ENCODE measurements at regions of chr14 and their contacts with region 1.

Region 1: GRCh38 chr14:67695394-67695949 is at the start of gene RDH11:
- DNase-seq: peak; percentile 87
- ATAC-seq: peak; percentile 98
- H3K4me3 ChIP-seq: peak within 1 kb of the TSS; percentile 77 to 97 (median 94)
- H3K4me3 Mint-ChIP-seq: peak within 1 kb of the TSS; percentile 96
- H3K27ac ChIP-seq: peak within 1 kb of the TSS; percentile 62 to 88
- H3K27ac Mint-ChIP-seq: peak within 1 kb of the TSS; percentile 89
- H3K4me1 ChIP-seq: peaks cover 6 to 13% of the 10 kb centered on the region in 2 donors
- H3K4me1 Mint-ChIP-seq: peaks cover 14% of the 10 kb centered on the region
- H3K27me3 ChIP-seq: no peaks in the 10 kb centered on the region
- H3K27me3 Mint-ChIP-seq: no peaks in the 10 kb centered on the region
- CTCF ChIP-seq: no peak
- total RNA-seq, gene RDH11: 32.8 and 35.4 TPM in 2 replicates

Region 2: DNA sequence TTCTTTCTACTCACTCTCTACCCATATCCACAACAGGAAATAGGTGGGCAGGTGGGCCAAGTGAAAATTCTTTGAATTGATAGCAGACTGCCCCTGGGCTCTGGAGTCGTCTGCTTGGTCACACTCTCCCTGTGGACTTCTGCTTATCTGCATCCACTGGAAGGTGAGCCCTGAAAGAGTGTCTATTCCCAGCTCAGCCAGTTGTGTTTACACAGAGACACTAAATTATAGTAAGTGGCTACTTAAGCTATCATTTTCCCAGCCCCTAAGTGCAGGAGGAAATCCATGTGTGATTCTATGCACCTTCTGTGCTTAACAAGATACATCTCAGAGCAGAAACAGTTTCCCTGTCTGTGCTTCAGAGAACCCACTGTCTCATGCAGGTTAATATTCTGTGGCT is 1944.6 kb before region 1 on chr14:
- CTCF ChIA-PET with region 1: no interaction called
- POLR2A ChIA-PET with region 1: no interaction called
- intact Hi-C with region 1: no loop called
- DNase-seq: no peak
- ATAC-seq: no peak
- H3K4me3 ChIP-seq: no peak overlapping the region
- H3K4me3 Mint-ChIP-seq: no peak overlapping the region
- H3K27ac ChIP-seq: no peak overlapping the region
- H3K27ac Mint-ChIP-seq: no peak overlapping the region
- H3K4me1 ChIP-seq: no peaks in the 10 kb centered on the region
- H3K4me1 Mint-ChIP-seq: no peaks in the 10 kb centered on the region
- H3K27me3 ChIP-seq: no peaks in the 10 kb centered on the region
- H3K27me3 Mint-ChIP-seq: no peaks in the 10 kb centered on the region
- CTCF ChIP-seq: no peak

Region 3: GRCh38 chr14:67359775-67360648 is 335.5 kb before region 1 on chr14 and contains the starts of genes ATP6V1D and EIF2S1:
- CTCF ChIA-PET with region 1: no interaction called
- POLR2A ChIA-PET with region 1: no interaction called
- intact Hi-C with region 1: loop called (anchors 1 kb)
- DNase-seq: peak; percentile 100
- ATAC-seq: peak; percentile 90
- H3K4me3 ChIP-seq: peak within 1 kb of the TSS; percentile 79 to 97 (median 93)
- H3K4me3 Mint-ChIP-seq: peak within 1 kb of the TSS; percentile 100
- H3K27ac ChIP-seq: peak within 1 kb of the TSS; percentile 92 to 95
- H3K27ac Mint-ChIP-seq: peak within 1 kb of the TSS; percentile 100
- H3K4me1 ChIP-seq: peaks cover 26% of the 10 kb centered on the region in 2 donors
- H3K4me1 Mint-ChIP-seq: peaks cover 50% of the 10 kb centered on the region
- H3K27me3 ChIP-seq: no peaks in the 10 kb centered on the region
- H3K27me3 Mint-ChIP-seq: no peaks in the 10 kb centered on the region
- CTCF ChIP-seq: peak; percentile 100
- total RNA-seq, gene ATP6V1D: 35.3 and 35.6 TPM in 2 replicates
- total RNA-seq, gene EIF2S1: 39.3 and 39.9 TPM in 2 replicates

Region 4: GRCh38 chr14:67583711-67584644 is 111.5 kb before region 1 on chr14:
- CTCF ChIA-PET with region 1: interaction called, 392 read pairs
- POLR2A ChIA-PET with region 1: no interaction called
- intact Hi-C with region 1: no loop called
- DNase-seq: peak; percentile 76
- ATAC-seq: peak; percentile 80
- H3K4me3 ChIP-seq: no peak overlapping the region
- H3K4me3 Mint-ChIP-seq: no peak overlapping the region
- H3K27ac ChIP-seq: no peak overlapping the region
- H3K27ac Mint-ChIP-seq: no peak overlapping the region
- H3K4me1 ChIP-seq: no peaks in the 10 kb centered on the region
- H3K4me1 Mint-ChIP-seq: peaks cover 6% of the 10 kb centered on the region
- H3K27me3 ChIP-seq: no peaks in the 10 kb centered on the region
- H3K27me3 Mint-ChIP-seq: no peaks in the 10 kb centered on the region
- CTCF ChIP-seq: peak; percentile 85

Region 5: DNA sequence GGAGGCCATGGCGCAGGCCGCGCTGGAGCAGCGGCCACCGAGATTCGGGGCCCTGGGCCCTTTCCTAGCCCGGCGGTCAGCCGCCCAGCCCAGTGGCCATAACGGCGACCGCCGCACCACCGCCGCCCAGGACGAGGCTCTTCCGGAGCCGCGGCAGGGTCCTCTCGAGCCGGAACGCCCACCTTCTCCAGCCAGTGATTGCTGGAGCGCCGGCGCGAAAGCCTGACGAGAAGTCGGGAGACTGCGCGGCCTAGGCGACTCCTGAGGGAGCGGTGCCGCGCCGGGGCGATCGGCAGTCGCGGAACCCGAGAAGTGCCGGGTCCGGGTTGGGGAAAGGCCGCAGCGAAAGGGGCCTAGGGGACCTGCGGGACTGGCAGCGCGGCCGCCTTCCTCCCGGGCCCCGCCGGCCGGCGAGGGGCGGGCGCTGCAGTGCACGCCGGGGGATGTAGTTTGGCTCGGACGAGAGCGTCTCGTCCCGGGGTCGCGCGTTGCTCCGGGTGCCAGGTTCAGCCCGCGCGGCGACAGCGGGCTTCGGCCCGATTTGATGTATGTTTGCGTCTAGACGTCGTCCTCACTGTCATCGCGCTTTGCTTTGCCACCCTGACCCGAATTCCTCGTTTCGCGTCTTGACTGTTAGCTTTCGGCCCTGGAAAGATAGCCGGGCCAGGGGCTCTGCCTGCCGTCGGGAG is 20.8 kb before region 1 on chr14 and contains the start of gene VTI1B:
- CTCF ChIA-PET with region 1: interaction called, 6 read pairs
- POLR2A ChIA-PET with region 1: no interaction called
- intact Hi-C with region 1: loop called (anchors 1 kb)
- DNase-seq: peak; percentile 94
- ATAC-seq: peak; percentile 92
- H3K4me3 ChIP-seq: peak within 1 kb of the TSS; percentile 71 to 97 (median 87)
- H3K4me3 Mint-ChIP-seq: peak within 1 kb of the TSS; percentile 86
- H3K27ac ChIP-seq: peak within 1 kb of the TSS; percentile 96 to 99
- H3K27ac Mint-ChIP-seq: peak within 1 kb of the TSS; percentile 95
- H3K4me1 ChIP-seq: peaks cover 19 to 22% of the 10 kb centered on the region in 2 donors
- H3K4me1 Mint-ChIP-seq: peaks cover 30% of the 10 kb centered on the region
- H3K27me3 ChIP-seq: no peaks in the 10 kb centered on the region
- H3K27me3 Mint-ChIP-seq: no peaks in the 10 kb centered on the region
- CTCF ChIP-seq: no peak
- total RNA-seq, gene VTI1B: 58.8 and 58.9 TPM in 2 replicates

Region 6: GRCh38 chr14:67837011-67837624 is 141.6 kb after region 1 on chr14:
- CTCF ChIA-PET with region 1: no interaction called
- POLR2A ChIA-PET with region 1: no interaction called
- intact Hi-C with region 1: no loop called
- DNase-seq: peak; percentile 83
- ATAC-seq: peak; percentile 64
- H3K4me3 ChIP-seq: no peak overlapping the region
- H3K4me3 Mint-ChIP-seq: no peak overlapping the region
- H3K27ac ChIP-seq: no peak overlapping the region
- H3K27ac Mint-ChIP-seq: no peak overlapping the region
- H3K4me1 ChIP-seq: no peaks in the 10 kb centered on the region
- H3K4me1 Mint-ChIP-seq: no peaks in the 10 kb centered on the region
- H3K27me3 ChIP-seq: no peaks in the 10 kb centered on the region
- H3K27me3 Mint-ChIP-seq: no peaks in the 10 kb centered on the region
- CTCF ChIP-seq: peak; percentile 72

Region 7: DNA sequence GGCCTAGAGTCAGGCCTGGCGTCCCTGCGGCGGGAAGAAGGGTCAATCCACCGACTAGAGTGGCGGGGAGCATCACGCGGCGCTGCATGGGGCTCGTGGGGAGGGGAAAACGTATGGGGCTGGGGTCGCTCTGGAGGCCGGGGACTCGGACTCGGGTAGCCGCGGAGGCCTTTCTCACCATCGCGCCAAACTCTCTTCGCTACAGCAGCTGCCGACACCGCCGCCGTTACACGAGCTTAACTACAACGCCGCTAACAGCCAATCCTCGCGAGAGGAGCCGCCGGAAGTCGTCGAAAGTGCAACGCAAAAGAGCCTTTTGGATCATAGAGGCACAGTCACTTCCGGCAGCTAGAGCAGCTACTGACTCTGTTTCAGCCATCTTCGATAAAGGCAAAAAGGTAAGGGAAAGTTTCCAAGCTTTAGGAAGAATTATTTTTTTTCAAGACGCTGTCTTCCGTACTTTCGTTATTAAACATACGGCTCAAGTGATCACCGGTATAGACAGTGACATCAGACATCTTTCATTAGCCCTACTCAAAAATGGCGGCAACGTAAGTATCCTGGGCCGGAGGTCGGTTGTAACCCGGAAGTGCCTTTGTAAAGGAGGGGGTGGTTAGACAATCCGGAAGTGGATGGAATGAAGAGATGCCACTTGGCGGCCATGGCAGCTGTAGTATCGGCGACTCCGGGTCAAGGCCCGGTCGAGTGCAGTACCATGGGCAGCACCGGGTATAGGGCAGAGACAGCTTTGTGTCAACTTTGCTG is 1702.8 kb after region 1 on chr14 and contains the starts of genes ERH and SLC39A9:
- CTCF ChIA-PET with region 1: no interaction called
- POLR2A ChIA-PET with region 1: no interaction called
- intact Hi-C with region 1: loop called (anchors 10 kb)
- DNase-seq: peak; percentile 98
- ATAC-seq: peak; percentile 83
- H3K4me3 ChIP-seq: peak within 1 kb of the TSS; percentile 82 to 99 (median 94)
- H3K4me3 Mint-ChIP-seq: peak within 1 kb of the TSS; percentile 95
- H3K27ac ChIP-seq: peak within 1 kb of the TSS; percentile 90 to 99
- H3K27ac Mint-ChIP-seq: peak within 1 kb of the TSS; percentile 98
- H3K4me1 ChIP-seq: peaks cover 41 to 47% of the 10 kb centered on the region in 2 donors
- H3K4me1 Mint-ChIP-seq: peaks cover 57% of the 10 kb centered on the region
- H3K27me3 ChIP-seq: no peaks in the 10 kb centered on the region
- H3K27me3 Mint-ChIP-seq: no peaks in the 10 kb centered on the region
- CTCF ChIP-seq: no peak
- total RNA-seq, gene ERH: 156 and 169 TPM in 2 replicates
- total RNA-seq, gene SLC39A9: 59.1 and 66.2 TPM in 2 replicates